ENCODE measurements at regions of chr2 and their contacts with region 1.

Region 1: DNA sequence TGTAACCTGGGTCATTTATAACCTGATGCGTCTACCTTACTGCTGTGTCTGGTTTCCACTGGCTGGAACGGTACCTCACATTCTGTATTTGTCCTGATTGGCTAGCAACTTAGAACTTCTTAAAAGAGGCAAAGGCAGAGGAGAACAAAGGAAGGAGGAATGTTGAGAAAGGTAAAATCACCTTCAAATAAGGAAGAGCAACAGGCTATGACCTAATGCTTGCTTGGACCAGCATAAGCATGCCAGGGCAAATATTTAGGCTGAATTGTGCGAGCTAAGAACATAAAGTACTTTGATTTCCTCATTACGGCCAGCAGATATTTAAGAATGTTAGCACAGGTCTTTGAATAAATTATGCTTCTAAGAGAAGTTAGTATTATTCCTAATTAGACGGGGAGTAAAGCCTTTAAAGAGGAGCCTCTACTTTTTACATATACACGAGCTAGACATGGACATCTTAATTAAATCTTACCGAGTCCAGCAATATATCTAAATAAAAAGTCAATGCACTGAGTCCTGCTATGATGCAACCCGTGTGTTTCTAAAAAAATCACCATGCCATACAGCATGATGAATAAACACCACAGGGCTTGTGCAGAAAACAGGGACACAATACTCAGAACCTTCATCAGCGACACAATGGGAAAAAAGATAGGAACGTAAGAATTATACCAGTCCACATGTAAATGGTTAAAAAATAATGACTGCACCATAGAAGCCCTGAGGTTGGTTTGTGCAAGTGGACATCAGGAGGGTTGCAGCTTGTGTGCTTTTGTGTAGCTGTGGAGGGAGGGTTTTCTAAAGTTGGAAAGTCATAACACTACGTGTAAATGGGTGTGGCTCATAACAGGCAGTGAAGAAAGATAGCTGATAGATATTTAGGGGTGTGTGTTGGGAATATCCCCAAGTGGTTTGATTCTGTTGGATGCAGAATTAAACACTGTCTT is 14.2 kb downstream of the SEPTIN2 start:
- DNase-seq: peak; percentile 32
- H3K4me3 Mint-ChIP-seq: peak overlapping the region; percentile 55
- H3K27ac Mint-ChIP-seq: peak overlapping the region; percentile 77
- H3K4me1 Mint-ChIP-seq: peaks cover 33% of the 10 kb centered on the region
- H3K27me3 Mint-ChIP-seq: no peaks in the 10 kb centered on the region
- CTCF ChIP-seq: no peak

Region 2: GRCh38 chr2:241309684-241310117 is 20.2 kb before region 1 on chr2:
- CTCF ChIA-PET with region 1: no interaction called
- POLR2A ChIA-PET with region 1: interaction called, 148 read pairs
- intact Hi-C with region 1: no loop called
- DNase-seq: peak; percentile 40
- H3K4me3 Mint-ChIP-seq: no peak overlapping the region
- H3K27ac Mint-ChIP-seq: peak overlapping the region; percentile 55
- H3K4me1 Mint-ChIP-seq: peaks cover 45% of the 10 kb centered on the region
- H3K27me3 Mint-ChIP-seq: no peaks in the 10 kb centered on the region
- CTCF ChIP-seq: no peak

Region 3: GRCh38 chr2:241350878-241351639 is 21.1 kb after region 1 on chr2:
- CTCF ChIA-PET with region 1: no interaction called
- POLR2A ChIA-PET with region 1: interaction called, 13 read pairs
- intact Hi-C with region 1: no loop called
- DNase-seq: no peak
- H3K4me3 Mint-ChIP-seq: no peak overlapping the region
- H3K27ac Mint-ChIP-seq: no peak overlapping the region
- H3K4me1 Mint-ChIP-seq: peaks cover 10% of the 10 kb centered on the region
- H3K27me3 Mint-ChIP-seq: no peaks in the 10 kb centered on the region
- CTCF ChIP-seq: no peak